ENCODE measurements at regions of chr9 and their contacts with region 1.

Region 1: GRCh38 chr9:36074870-36075532 is 38.3 kb downstream of the RECK start:
- DNase-seq: peak; percentile 94
- H3K4me3 ChIP-seq: no peak overlapping the region
- H3K27ac ChIP-seq: no peak overlapping the region
- H3K4me1 ChIP-seq: peaks cover 13% of the 10 kb centered on the region
- H3K27me3 ChIP-seq: no peaks in the 10 kb centered on the region
- CTCF ChIP-seq: no peak

Region 2: DNA sequence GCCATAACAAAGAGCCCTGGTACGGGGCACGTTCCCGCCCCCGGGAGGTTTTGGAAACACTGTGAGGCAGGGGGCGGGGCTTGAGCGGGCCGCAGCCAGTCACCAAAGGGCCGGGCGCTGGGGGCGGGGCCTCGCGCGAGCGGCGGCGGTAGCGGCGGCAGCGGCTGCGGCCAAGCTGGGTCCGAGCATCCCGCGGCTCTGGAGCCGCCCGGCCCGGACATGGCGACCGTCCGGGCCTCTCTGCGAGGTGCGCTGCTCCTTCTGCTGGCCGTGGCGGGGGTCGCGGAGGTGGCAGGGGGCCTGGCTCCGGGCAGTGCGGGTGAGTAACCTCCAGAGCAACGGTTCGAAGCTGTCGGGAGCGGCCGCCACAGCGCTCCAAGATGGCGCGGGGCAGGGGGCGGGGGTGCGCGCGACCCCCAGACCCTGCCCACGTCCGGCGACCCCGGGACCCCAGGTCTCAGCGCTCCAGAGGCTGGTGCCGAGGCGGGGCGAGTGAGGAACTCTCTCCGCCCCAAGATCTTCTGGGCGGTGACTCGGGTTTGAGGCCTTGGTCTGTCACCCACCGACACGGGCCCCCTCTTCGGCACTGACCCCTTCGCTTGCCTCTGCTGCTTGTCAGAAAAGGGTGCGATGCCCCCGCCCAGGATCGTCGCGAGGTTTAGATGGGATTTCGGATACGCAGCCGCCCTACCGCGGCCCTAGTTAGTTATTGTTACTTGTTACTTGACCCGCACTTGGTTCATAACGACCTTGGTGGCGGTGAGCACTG is 38.0 kb before region 1 on chr9 and contains the start of gene RECK:
- CTCF ChIA-PET with region 1: no interaction called
- dilution Hi-C with region 1: loop called (anchors 5 kb)
- in situ Hi-C with region 1: no loop called
- intact Hi-C with region 1: loop called (anchors 5 kb)
- DNase-seq: peak; percentile 84
- H3K4me3 ChIP-seq: peak within 1 kb of the TSS; percentile 84 to 90 (median 86)
- H3K27ac ChIP-seq: peak within 1 kb of the TSS; percentile 56
- H3K4me1 ChIP-seq: peaks cover 45% of the 10 kb centered on the region
- H3K27me3 ChIP-seq: no peaks in the 10 kb centered on the region
- CTCF ChIP-seq: no peak
- total RNA-seq, gene RECK: 5.6 to 12.7 TPM

Region 3: DNA sequence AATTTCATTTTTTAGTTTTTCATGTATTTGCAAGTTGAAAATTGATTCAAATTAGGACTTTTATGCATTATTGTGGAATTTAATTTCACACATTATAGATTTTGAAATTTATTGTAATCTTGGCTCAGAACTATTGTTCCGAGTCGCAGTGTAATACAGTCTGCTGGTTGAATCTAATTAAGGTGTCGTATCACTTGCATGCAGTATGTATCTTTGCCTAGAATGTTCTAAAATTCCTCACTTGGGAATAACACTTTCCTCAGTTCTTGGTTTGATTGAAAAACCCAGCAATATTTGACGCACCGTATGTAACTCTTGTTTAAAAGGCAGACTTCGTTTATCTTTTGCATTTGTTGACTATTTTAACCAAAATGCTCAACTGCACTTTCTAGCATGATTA is 547.1 kb after region 1 on chr9:
- CTCF ChIA-PET with region 1: no interaction called
- dilution Hi-C with region 1: no loop called
- in situ Hi-C with region 1: no loop called
- intact Hi-C with region 1: no loop called
- DNase-seq: no peak
- H3K4me3 ChIP-seq: no peak overlapping the region
- H3K27ac ChIP-seq: no peak overlapping the region
- H3K4me1 ChIP-seq: peaks cover 22% of the 10 kb centered on the region
- H3K27me3 ChIP-seq: no peaks in the 10 kb centered on the region
- CTCF ChIP-seq: no peak

Measured in mammary epithelial cell (primary cell).